Right ventricle myocardium inferior (tissue), 1 donor: ENCODE measurements at regions of chr18 and their contacts with region 1.

Region 1: GRCh38 chr18:35497370-35498197 is at the start of gene INO80C:
- DNase-seq: peak; percentile 96
- ATAC-seq: peak; percentile 98
- total RNA-seq, gene INO80C: 21.3 TPM

Region 2: DNA sequence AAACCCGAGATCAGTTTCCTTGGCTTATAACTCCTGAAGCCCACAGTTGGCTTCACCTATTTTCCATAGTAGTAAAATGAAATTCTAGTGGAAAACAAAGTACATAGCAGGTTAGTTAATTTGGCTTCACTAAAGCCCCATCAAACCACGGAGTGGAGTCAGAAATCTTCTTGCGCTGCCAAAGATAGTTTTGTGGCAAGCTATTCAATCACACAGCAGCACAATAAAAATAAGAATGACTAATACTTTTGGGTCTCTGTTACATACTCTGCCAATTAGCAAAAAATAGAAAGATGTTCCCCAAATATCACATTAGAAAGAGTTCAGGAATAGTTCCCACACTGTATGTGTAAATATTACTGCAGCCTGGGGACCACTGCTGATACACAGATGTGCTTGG is 1097.7 kb before region 1 on chr18:
- intact Hi-C with region 1: no loop called
- DNase-seq: no peak
- ATAC-seq: no peak

Region 3: GRCh38 chr18:35240664-35241447 is 256.7 kb before region 1 on chr18 and contains the start of gene ZNF397:
- intact Hi-C with region 1: loop called (anchors 2 kb)
- DNase-seq: peak; percentile 99
- ATAC-seq: peak; percentile 100
- total RNA-seq, gene ZNF397: 15.5 TPM

Region 4: GRCh38 chr18:35407871-35408481 is 89.6 kb before region 1 on chr18:
- intact Hi-C with region 1: loop called (anchors 5 kb)
- DNase-seq: no peak
- ATAC-seq: peak; percentile 82

Region 5: DNA sequence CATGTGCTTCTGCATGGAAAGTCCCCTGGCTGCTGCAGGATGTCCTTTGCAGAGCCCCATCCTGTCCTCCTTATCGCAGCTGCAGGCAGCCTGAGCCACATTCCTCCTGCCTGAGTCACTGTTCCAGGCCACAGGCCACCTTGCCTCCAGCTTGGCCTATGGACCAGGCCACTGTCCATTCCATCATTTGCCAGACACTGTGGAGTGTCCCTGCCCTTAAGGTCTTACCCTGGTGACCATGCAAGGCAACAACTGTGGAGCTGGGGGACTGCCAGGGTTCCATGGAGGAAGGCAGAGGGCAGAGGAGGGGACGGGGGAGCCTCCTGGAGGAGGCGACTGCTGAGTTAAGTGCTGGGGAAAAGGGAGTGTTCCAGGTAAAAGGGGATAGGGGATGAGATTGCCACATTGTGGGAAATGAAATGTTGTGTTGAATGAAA is 38.6 kb before region 1 on chr18:
- intact Hi-C with region 1: loop called (anchors 5 kb)
- DNase-seq: peak; percentile 76
- ATAC-seq: peak; percentile 86

Region 6: DNA sequence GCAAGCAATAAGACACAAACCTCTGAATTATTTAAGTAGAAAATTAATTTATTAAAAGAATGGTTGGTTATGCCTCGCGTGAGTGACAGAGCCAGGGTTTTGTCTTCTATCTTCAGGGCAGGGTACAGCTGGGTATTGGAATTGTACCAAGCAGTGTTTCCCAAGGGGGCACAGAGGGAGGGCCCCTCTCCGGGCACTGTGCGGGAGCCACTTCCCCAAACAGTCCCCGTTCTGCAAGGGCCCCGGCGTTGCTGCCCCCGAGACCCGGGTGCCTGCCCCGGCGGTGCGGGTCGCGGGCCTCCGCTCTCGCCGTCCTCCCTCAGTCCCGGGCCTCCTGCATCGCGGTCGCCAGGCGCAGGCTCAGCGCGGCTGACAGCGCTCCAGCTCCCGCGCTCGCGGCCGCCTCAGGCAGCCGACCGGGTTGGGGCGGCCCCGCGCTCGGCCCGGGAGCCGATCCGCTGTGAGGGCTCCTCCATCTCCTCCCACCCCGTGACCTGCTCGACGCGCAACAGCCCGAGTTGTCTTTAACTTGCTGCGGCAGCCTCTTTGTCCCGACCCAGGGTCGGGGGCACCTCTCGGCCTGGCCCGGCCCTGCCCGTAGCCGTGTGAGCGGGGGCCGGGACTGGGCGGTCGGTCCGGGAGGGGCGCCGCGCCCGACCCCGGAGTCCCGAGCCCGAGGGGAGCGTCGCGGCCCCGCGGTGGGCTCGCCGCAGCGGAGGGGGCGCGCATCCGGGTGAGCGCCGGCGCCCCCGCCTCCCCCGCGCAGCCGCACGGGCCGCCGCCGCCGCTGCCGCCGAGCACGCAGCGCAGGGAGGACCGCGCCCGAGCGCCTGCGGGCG is 83.3 kb after region 1 on chr18:
- intact Hi-C with region 1: loop called (anchors 2 kb)
- DNase-seq: peak; percentile 74
- ATAC-seq: peak; percentile 83

Region 7: DNA sequence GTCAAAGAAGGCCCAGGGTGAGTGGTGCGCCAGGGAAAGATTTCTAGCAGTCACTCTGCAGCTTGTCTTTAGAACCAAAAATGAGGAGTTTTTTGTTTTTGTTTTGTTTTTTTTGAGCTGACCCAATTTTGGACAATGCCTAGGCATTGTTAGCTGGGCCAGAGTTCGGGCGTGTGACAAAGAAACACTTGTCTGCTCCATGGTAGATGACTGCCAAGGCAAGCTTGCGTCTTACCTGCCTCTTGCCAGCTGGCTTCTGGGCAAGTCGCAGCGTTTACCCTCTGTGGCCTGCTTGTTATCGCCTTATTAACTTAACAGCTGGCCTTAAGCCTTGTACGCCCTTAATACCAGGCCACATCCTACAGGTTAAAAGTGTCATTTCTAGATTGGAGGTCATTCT is 198.2 kb after region 1 on chr18:
- intact Hi-C with region 1: loop called (anchors 10 kb)
- DNase-seq: peak; percentile 81
- ATAC-seq: peak; percentile 94